ENCODE measurements at regions of chr11 and their contacts with region 1.

Region 1: GRCh38 chr11:4044976-4045646 is 49.5 kb upstream of the RRM1 start:
- DNase-seq: no peak
- ATAC-seq: peak; percentile 24 to 56 (median 40)
- H3K4me3 ChIP-seq: no peak overlapping the region
- H3K27ac ChIP-seq: peak overlapping the region; percentile 89
- H3K4me1 ChIP-seq: peaks cover 53% of the 10 kb centered on the region
- H3K27me3 ChIP-seq: no peaks in the 10 kb centered on the region
- CTCF ChIP-seq: no peak

Region 2: DNA sequence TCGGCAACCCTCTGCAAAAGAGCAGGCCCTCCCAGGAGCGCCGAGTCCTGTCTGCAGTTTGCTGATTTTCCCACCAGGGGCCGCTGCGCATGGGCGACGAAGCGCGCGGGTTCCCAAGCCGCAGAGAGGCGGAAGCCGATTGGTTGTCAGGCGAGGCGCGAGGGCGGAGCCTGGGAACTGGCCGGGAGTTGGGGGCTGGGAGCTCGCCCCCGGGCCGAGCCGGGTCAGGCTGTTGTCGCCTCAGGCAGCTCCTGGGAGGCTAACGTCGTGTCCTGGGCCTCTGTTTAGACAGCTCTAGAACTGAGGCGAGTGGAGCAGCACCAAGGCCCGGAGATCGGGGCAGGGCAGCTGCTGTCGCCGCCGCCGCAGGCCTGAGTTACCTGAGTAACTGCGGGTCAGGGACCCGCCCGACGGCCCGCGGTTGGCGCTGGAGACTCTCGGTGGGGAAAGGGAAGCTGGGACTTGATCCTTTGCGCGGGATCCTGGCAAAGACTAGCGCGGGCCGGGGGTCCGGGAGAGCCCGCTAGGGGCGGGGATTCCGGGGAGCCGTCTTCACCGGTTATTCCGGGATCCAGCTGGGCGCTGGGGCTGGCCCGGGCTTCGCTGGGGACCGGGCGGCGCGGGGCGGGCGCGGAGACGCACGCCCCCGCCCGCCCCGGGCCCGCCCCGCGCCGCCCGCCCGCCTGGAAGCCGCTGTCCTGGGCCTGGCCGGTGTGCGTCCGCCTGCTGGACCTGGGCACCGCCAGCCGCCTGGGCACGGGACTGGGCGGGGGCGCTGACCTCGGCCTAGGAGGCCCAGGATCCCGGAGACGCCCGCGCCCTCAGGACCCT is 189.9 kb before region 1 on chr11 and contains the start of gene STIM1:
- intact Hi-C with region 1: loop called in 1 of 2 experiments (anchors 1 kb)
- DNase-seq: peak; percentile 96 to 98
- ATAC-seq: peak; percentile 73 to 83 (median 82)
- H3K4me3 ChIP-seq: peak within 1 kb of the TSS; percentile 90
- H3K27ac ChIP-seq: peak within 1 kb of the TSS; percentile 99
- H3K4me1 ChIP-seq: peaks cover 51% of the 10 kb centered on the region
- H3K27me3 ChIP-seq: no peaks in the 10 kb centered on the region
- CTCF ChIP-seq: peak; percentile 98
- total RNA-seq, gene STIM1: 97.5 to 147 (median 112) TPM

Region 3: GRCh38 chr11:3947061-3947460 is 98.0 kb before region 1 on chr11:
- intact Hi-C with region 1: loop called (anchors 5 to 10 kb)
- DNase-seq: no peak
- ATAC-seq: peak in 3 of 4 donors; percentile 38 to 62 (median 42)
- H3K4me3 ChIP-seq: no peak overlapping the region
- H3K27ac ChIP-seq: peak overlapping the region; percentile 79
- H3K4me1 ChIP-seq: peaks cover 87% of the 10 kb centered on the region
- H3K27me3 ChIP-seq: no peaks in the 10 kb centered on the region
- CTCF ChIP-seq: no peak

Region 4: DNA sequence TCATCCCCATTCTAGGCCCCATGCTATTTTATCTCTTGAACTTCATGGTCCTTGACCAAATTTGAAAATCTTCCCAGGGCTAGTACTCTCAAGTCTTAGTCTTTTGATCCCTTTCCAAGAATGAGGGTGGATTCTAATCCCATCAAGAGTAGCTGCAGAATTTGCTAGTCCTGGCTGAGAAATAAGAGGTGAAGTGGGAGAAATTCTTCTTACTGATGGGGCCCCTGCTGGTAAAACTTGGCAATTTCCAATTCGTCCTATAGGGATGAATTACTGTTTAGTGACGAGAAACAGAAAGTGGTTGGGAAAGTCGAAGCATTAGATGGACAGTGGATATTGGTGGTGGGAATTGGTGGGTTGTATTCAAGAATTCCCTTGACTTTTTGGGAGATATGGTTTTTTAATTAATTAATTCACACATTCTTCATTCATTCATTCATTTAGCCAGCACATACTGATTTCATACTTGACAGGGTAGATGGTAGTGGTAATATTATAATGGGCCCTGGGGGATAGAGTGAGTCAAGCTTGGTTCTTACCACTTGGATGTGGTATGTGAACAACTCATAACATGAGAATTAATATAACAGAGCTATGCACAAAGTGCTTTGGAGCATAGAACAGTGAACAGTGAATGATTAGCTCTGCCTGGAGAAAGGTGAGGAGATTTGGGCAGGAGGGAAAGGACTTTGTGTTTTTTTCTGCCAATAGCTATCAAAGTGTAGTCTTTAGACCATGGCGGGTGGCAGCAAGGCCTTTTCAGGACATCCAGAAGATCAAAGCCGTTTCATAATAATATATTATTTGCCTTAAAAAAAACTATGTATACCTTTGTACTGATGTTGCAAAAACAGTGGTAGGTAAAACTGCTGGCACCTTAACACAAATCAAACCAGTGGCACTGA is 85.8 kb before region 1 on chr11:
- intact Hi-C with region 1: loop called in 1 of 2 experiments (anchors 10 kb)
- DNase-seq: no peak
- ATAC-seq: peak; percentile 58 to 83 (median 65)
- H3K4me3 ChIP-seq: no peak overlapping the region
- H3K27ac ChIP-seq: no peak overlapping the region
- H3K4me1 ChIP-seq: peaks cover 62% of the 10 kb centered on the region
- H3K27me3 ChIP-seq: no peaks in the 10 kb centered on the region
- CTCF ChIP-seq: peak; percentile 8

Region 5: DNA sequence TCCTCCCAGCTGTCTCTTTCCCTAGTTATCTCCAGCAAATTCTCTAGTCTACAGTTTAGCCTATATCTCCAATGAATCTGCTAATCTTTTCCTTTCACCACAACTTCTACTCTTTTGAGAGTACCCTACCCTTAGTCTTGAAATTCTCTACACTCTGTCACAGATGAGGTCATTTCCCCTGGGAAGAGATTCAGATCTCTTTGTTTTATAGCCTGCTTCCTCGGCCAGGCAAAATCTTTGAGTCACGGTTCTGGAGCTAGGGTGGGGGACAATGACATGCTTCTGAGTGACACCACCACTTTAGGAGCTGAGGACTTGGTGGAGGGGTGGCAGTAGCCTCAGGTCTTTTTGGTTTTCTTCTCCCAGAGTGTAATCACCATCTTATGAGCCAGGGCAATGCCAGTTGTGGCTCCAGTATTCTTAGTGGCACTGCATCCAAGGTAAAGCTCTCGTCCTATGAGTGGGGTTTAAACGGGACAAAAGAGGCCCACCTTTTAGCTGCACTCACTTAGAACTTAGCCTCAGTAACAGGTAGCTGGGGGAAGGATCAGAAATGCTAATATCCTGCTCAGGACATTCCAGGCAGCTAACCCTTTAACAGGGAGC is 49.1 kb before region 1 on chr11:
- intact Hi-C with region 1: loop called in 1 of 2 experiments (anchors 5 kb)
- DNase-seq: no peak
- ATAC-seq: peak; percentile 32 to 69 (median 59)
- H3K4me3 ChIP-seq: no peak overlapping the region
- H3K27ac ChIP-seq: peak overlapping the region; percentile 37
- H3K4me1 ChIP-seq: peaks cover 32% of the 10 kb centered on the region
- H3K27me3 ChIP-seq: no peaks in the 10 kb centered on the region
- CTCF ChIP-seq: no peak

Region 6: GRCh38 chr11:4593739-4594138 is 548.6 kb after region 1 on chr11 and contains the start of gene OR52I1:
- intact Hi-C with region 1: no loop called
- DNase-seq: no peak
- ATAC-seq: no peak
- H3K4me3 ChIP-seq: no peak within 1 kb of the TSS
- H3K27ac ChIP-seq: no peak within 1 kb of the TSS
- H3K4me1 ChIP-seq: no peaks in the 10 kb centered on the region
- H3K27me3 ChIP-seq: no peaks in the 10 kb centered on the region
- CTCF ChIP-seq: no peak
- total RNA-seq, gene OR52I1: not detected

Measured in psoas muscle (tissue), 8 donors.